Naive thymus-derived CD4-positive, alpha-beta T cell (primary cell): ENCODE measurements at regions of chr1 and their contacts with region 1.

Region 1: DNA sequence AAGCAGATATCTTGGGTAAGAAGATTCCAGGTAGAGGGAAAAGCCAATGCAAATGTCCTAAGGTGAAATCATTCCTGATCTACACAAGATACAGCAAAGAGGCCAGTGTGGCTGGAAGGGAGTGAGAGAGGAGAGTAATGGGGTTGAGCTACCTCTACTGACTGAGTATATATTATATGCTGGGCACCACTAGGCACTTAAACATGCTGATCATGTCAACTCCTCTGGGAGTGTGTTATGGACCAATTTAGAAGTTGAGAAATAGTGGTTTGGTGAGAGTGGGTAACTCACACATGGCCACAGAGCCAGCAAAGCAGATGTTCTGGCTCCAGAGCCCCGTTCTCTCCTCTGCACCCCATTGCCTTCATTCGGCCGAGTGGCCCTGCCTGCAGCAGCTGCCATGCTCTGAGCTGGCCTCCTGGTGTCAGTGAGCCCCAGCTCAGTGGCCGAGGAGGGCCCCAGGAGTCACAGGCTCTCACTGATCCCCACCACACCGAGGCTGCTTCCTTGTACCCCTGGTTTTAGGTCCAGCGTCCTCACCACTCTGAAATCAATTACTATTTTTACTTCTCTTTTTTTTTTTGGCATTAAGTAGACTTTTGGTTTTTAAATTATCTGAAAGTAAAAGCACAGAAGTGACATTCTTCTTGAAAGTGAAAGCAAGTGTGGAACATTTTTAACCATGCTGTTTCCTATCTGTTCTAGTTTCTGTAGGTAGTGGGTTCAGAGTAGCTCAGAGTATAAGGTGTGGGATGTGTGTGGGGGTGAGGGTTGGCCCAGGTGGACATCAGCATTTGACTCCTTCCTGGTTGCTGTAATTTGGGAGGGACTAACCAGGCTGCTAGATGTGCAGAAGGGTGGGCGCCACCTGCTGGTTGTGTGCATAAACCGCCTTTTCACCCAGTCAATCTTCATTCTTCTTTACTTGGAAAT is 45.8 kb upstream of the CRNN start:
- DNase-seq: peak; percentile 34 to 74 (median 63)
- ATAC-seq: peak; percentile 83
- H3K4me3 ChIP-seq: peak overlapping the region; percentile 39
- H3K4me3 Mint-ChIP-seq: peak overlapping the region; percentile 61 to 85 (median 74)
- H3K27ac ChIP-seq: peak overlapping the region; percentile 12
- H3K27ac Mint-ChIP-seq: peak overlapping the region; percentile 63 to 93 (median 86)
- H3K4me1 ChIP-seq: peaks cover 5 to 10% of the 10 kb centered on the region in 2 donors
- H3K4me1 Mint-ChIP-seq: peaks cover 22 to 30% (median 27%) of the 10 kb centered on the region in 7 donors
- H3K27me3 ChIP-seq: no peaks in the 10 kb centered on the region
- H3K27me3 Mint-ChIP-seq: peaks cover 0 to 9% (median 0%) of the 10 kb centered on the region in 5 donors

Region 2: GRCh38 chr1:152047730-152048402 is 412.0 kb before region 1 on chr1:
- CTCF ChIA-PET with region 1: interaction called, 15 read pairs
- POLR2A ChIA-PET with region 1: no interaction called
- intact Hi-C with region 1: loop called (anchors 1 kb)
- DNase-seq: peak; percentile 57 to 82 (median 76)
- ATAC-seq: peak; percentile 93
- H3K4me3 ChIP-seq: peak overlapping the region; percentile 10
- H3K4me3 Mint-ChIP-seq: peak overlapping the region; percentile 56 to 87 (median 77)
- H3K27ac ChIP-seq: peak overlapping the region; percentile 81
- H3K27ac Mint-ChIP-seq: peak overlapping the region; percentile 92 to 98 (median 98)
- H3K4me1 ChIP-seq: peaks cover 19 to 21% of the 10 kb centered on the region in 2 donors
- H3K4me1 Mint-ChIP-seq: peaks cover 21 to 53% (median 30%) of the 10 kb centered on the region in 7 donors
- H3K27me3 ChIP-seq: no peaks in the 10 kb centered on the region
- H3K27me3 Mint-ChIP-seq: peaks cover 0 to 3% (median 0%) of the 10 kb centered on the region in 5 donors

Region 3: GRCh38 chr1:152170287-152170905 is 289.5 kb before region 1 on chr1:
- CTCF ChIA-PET with region 1: no interaction called
- POLR2A ChIA-PET with region 1: no interaction called
- intact Hi-C with region 1: no loop called
- DNase-seq: no peak
- ATAC-seq: no peak
- H3K4me3 ChIP-seq: no peak overlapping the region
- H3K4me3 Mint-ChIP-seq: no peak overlapping the region
- H3K27ac ChIP-seq: no peak overlapping the region
- H3K27ac Mint-ChIP-seq: no peak overlapping the region
- H3K4me1 ChIP-seq: no peaks in the 10 kb centered on the region
- H3K4me1 Mint-ChIP-seq: peaks cover 7 to 11% (median 7%) of the 10 kb centered on the region in 7 donors
- H3K27me3 ChIP-seq: no peaks in the 10 kb centered on the region
- H3K27me3 Mint-ChIP-seq: peaks cover 0 to 9% (median 5%) of the 10 kb centered on the region in 5 donors

Region 4: DNA sequence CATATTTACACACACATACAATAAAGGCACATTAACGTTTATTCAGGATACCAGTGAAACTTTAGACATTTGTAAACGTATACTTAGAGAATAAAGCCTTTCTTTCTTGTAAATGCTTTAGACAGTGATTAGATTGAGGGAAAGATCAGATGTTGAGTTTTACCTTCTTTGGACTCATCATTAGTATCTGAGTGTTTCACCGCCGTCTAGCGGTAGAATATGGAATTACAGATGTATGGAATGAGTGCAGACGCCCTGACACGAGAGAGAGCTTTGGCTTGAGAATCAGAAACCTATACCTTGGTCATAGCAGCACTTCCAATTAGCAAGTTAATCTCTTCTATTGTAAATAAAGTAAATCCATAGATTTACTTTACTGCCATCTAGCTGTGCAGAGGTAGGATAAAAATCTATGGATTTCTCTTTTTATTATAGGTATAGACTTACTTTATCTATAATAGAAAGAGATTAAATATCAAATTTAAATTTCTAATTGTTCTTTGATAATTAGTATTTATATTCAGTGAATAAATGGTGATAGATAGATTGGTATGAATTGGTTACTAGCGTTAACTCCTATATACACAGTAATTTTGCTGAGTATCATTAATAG is 112.6 kb before region 1 on chr1:
- CTCF ChIA-PET with region 1: interaction called, 22 read pairs
- POLR2A ChIA-PET with region 1: no interaction called
- intact Hi-C with region 1: loop called (anchors 1 kb)
- DNase-seq: peak in 6 of 9 donors; percentile 20 to 59 (median 48)
- ATAC-seq: peak; percentile 57
- H3K4me3 ChIP-seq: no peak overlapping the region
- H3K4me3 Mint-ChIP-seq: no peak overlapping the region
- H3K27ac ChIP-seq: no peak overlapping the region
- H3K27ac Mint-ChIP-seq: no peak overlapping the region
- H3K4me1 ChIP-seq: no peaks in the 10 kb centered on the region
- H3K4me1 Mint-ChIP-seq: no peaks in the 10 kb centered on the region
- H3K27me3 ChIP-seq: peaks cover 0 to 6% of the 10 kb centered on the region in 2 donors
- H3K27me3 Mint-ChIP-seq: peaks cover 19 to 35% (median 22%) of the 10 kb centered on the region in 5 donors

Region 5: GRCh38 chr1:152374451-152374850 is 85.4 kb before region 1 on chr1:
- CTCF ChIA-PET with region 1: no interaction called
- POLR2A ChIA-PET with region 1: no interaction called
- intact Hi-C with region 1: no loop called
- DNase-seq: no peak
- ATAC-seq: no peak
- H3K4me3 ChIP-seq: no peak overlapping the region
- H3K4me3 Mint-ChIP-seq: no peak overlapping the region
- H3K27ac ChIP-seq: no peak overlapping the region
- H3K27ac Mint-ChIP-seq: no peak overlapping the region
- H3K4me1 ChIP-seq: no peaks in the 10 kb centered on the region
- H3K4me1 Mint-ChIP-seq: peaks cover 0 to 2% (median 0%) of the 10 kb centered on the region in 7 donors
- H3K27me3 ChIP-seq: no peaks in the 10 kb centered on the region
- H3K27me3 Mint-ChIP-seq: peaks cover 4 to 21% (median 7%) of the 10 kb centered on the region in 5 donors

Region 6: DNA sequence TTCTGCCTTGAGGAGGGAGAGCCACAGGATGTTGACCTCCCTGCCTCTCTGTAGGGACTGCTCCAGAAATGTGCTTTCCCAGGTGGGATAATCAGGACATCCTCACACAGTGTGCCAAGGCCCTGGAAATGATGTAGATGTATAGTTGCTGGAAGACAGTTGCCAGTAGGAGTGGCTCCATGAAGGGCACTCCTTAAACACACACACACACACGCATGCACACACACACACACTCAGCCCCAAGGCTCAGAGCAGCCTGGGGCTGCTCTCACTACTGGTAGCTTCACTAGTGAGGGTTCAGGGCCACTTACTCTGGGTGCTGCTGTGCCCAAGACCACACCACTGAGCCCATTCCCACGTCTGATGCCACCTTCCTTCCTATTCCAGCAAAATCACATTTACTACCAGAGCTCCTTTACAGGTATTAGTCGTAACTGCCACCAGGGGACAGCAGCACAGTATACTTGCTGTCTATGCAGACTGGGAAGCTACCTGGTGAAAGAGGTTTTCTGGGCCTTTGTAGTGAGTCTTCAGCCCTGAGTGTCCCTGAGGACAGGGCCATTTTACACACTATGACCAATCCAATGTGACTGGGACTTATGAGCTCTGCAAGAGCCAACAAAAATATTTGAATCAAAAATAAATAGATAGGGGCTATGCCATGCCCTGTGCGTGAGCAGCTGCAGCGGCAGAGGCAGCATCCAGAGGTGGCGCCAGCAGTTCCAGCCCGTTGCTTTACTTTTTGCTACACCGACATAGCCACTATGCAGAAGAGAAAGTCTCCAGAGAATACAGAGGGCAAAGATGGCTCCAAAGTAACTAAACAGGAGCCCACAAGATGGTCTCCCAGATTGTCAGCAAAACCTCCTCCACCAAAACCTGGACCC is 60.8 kb before region 1 on chr1:
- CTCF ChIA-PET with region 1: interaction called, 4 read pairs
- POLR2A ChIA-PET with region 1: no interaction called
- intact Hi-C with region 1: loop called (anchors 1 to 2 kb)
- DNase-seq: peak in 3 of 9 donors; percentile 0 to 12 (median 5)
- ATAC-seq: peak; percentile 29
- H3K4me3 ChIP-seq: no peak overlapping the region
- H3K4me3 Mint-ChIP-seq: no peak overlapping the region
- H3K27ac ChIP-seq: no peak overlapping the region
- H3K27ac Mint-ChIP-seq: no peak overlapping the region
- H3K4me1 ChIP-seq: no peaks in the 10 kb centered on the region
- H3K4me1 Mint-ChIP-seq: no peaks in the 10 kb centered on the region
- H3K27me3 ChIP-seq: no peaks in the 10 kb centered on the region
- H3K27me3 Mint-ChIP-seq: peaks cover 9 to 35% (median 18%) of the 10 kb centered on the region in 5 donors

Region 7: GRCh38 chr1:152440635-152441471 is 19.0 kb before region 1 on chr1:
- CTCF ChIA-PET with region 1: interaction called, 27 read pairs
- POLR2A ChIA-PET with region 1: no interaction called
- intact Hi-C with region 1: loop called (anchors 1 to 2 kb)
- DNase-seq: peak; percentile 32 to 72 (median 59)
- ATAC-seq: peak; percentile 96
- H3K4me3 ChIP-seq: no peak overlapping the region
- H3K4me3 Mint-ChIP-seq: no peak overlapping the region
- H3K27ac ChIP-seq: no peak overlapping the region
- H3K27ac Mint-ChIP-seq: peak overlapping the region in 4 of 9 donors; percentile 42 to 72 (median 46)
- H3K4me1 ChIP-seq: no peaks in the 10 kb centered on the region
- H3K4me1 Mint-ChIP-seq: peaks cover 0 to 8% (median 0%) of the 10 kb centered on the region in 7 donors
- H3K27me3 ChIP-seq: no peaks in the 10 kb centered on the region
- H3K27me3 Mint-ChIP-seq: peaks cover 15 to 30% (median 23%) of the 10 kb centered on the region in 5 donors

Region 8: GRCh38 chr1:152448095-152448494 is 11.8 kb before region 1 on chr1:
- CTCF ChIA-PET with region 1: interaction called, 27 read pairs
- POLR2A ChIA-PET with region 1: no interaction called
- intact Hi-C with region 1: no loop called
- DNase-seq: no peak
- ATAC-seq: no peak
- H3K4me3 ChIP-seq: no peak overlapping the region
- H3K4me3 Mint-ChIP-seq: no peak overlapping the region
- H3K27ac ChIP-seq: no peak overlapping the region
- H3K27ac Mint-ChIP-seq: no peak overlapping the region
- H3K4me1 ChIP-seq: no peaks in the 10 kb centered on the region
- H3K4me1 Mint-ChIP-seq: no peaks in the 10 kb centered on the region
- H3K27me3 ChIP-seq: no peaks in the 10 kb centered on the region
- H3K27me3 Mint-ChIP-seq: peaks cover 0 to 14% (median 4%) of the 10 kb centered on the region in 5 donors